OCI-LY7 (cell line): ENCODE measurements at regions of chr5 and their contacts with region 1.

Region 1: GRCh38 chr5:31825518-31826068 is 186.7 kb downstream of the PDZD2 start:
- DNase-seq: peak; percentile 80
- H3K4me3 ChIP-seq: no peak overlapping the region
- H3K27ac ChIP-seq: no peak overlapping the region
- H3K4me1 ChIP-seq: peaks cover 5% of the 10 kb centered on the region
- CTCF ChIP-seq: peak; percentile 94

Region 2: GRCh38 chr5:31581498-31582099 is 244.0 kb before region 1 on chr5:
- CTCF ChIA-PET with region 1: no interaction called
- POLR2A ChIA-PET with region 1: no interaction called
- intact Hi-C with region 1: loop called (anchors 5 kb)
- DNase-seq: peak; percentile 56
- H3K4me3 ChIP-seq: no peak overlapping the region
- H3K27ac ChIP-seq: no peak overlapping the region
- H3K4me1 ChIP-seq: no peaks in the 10 kb centered on the region
- CTCF ChIP-seq: peak; percentile 84

Region 3: DNA sequence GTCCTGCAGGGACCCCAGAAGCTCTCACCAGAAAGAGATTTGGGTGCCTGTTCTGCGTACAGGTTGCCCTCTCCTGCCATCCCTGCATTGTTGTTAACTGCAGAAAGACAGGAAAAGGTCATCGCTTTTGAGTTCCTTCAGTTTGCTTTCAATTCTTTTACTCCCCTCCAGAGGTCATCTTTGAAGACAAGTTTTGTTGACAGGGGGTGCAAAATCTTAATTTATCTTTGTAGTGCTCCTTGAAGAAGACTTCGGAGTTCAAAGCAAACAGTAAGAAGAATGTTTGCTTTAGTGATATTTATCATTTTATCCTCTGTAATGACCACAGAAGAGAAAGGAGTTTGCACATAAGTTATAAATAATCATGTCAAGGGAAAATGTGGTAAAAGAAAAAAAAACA is 13.4 kb after region 1 on chr5:
- CTCF ChIA-PET with region 1: no interaction called
- POLR2A ChIA-PET with region 1: no interaction called
- intact Hi-C with region 1: no loop called
- DNase-seq: no peak
- H3K4me3 ChIP-seq: no peak overlapping the region
- H3K27ac ChIP-seq: no peak overlapping the region
- H3K4me1 ChIP-seq: no peaks in the 10 kb centered on the region
- CTCF ChIP-seq: no peak

Region 4: GRCh38 chr5:31921852-31922305 is 96.3 kb after region 1 on chr5:
- CTCF ChIA-PET with region 1: no interaction called
- POLR2A ChIA-PET with region 1: interaction called, 11 read pairs
- intact Hi-C with region 1: no loop called
- DNase-seq: no peak
- H3K4me3 ChIP-seq: no peak overlapping the region
- H3K27ac ChIP-seq: no peak overlapping the region
- H3K4me1 ChIP-seq: no peaks in the 10 kb centered on the region
- CTCF ChIP-seq: no peak

Region 5: DNA sequence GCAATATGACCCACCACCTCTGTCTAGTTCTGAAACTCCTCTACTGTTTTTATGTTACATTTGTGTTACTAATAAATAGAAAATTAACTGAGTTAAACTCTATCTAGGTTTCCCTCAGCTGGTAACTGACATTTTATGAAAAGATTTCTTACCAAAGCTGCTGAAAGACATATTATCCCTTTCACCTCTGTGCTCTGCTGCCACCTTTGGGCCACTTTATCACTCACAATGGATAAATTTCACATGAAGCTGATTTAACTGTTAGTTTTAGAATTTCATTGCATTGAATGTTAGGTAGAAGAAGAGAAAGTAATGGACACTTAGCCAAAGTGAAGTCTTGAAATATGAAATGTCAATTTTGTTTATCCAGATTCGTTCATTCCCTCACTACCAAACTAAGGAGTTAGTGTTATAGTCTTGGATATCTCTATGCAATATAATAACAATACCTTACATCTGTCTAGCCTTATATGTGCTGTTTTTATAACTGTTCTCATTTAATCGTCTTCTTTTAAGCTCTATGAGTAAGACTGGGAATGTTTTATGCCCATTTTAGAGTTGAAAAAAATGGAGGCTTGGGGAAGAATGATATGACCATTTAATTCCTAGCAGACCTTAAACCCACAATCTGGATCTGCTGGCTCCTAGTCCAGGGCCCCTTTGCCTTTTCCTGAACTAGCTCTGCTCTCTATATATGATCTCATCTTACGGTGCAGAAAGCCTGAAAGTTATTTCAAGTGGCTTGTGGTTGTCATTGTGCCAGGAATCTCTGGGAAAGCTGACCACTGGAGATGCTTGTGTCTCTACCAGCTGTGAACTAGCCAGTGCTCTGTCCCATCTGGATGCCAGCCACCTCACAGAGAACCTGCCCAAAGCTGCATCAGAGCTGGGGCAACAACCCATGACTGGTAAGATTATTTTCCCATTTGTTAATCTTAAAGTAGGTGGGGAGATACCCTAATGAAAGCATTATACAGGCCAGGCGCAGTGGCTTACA is 251.4 kb after region 1 on chr5:
- CTCF ChIA-PET with region 1: interaction called, 3 read pairs
- POLR2A ChIA-PET with region 1: no interaction called
- intact Hi-C with region 1: loop called (anchors 1 kb)
- DNase-seq: peak; percentile 68
- H3K4me3 ChIP-seq: no peak overlapping the region
- H3K27ac ChIP-seq: no peak overlapping the region
- H3K4me1 ChIP-seq: no peaks in the 10 kb centered on the region
- CTCF ChIP-seq: peak; percentile 99

Region 6: DNA sequence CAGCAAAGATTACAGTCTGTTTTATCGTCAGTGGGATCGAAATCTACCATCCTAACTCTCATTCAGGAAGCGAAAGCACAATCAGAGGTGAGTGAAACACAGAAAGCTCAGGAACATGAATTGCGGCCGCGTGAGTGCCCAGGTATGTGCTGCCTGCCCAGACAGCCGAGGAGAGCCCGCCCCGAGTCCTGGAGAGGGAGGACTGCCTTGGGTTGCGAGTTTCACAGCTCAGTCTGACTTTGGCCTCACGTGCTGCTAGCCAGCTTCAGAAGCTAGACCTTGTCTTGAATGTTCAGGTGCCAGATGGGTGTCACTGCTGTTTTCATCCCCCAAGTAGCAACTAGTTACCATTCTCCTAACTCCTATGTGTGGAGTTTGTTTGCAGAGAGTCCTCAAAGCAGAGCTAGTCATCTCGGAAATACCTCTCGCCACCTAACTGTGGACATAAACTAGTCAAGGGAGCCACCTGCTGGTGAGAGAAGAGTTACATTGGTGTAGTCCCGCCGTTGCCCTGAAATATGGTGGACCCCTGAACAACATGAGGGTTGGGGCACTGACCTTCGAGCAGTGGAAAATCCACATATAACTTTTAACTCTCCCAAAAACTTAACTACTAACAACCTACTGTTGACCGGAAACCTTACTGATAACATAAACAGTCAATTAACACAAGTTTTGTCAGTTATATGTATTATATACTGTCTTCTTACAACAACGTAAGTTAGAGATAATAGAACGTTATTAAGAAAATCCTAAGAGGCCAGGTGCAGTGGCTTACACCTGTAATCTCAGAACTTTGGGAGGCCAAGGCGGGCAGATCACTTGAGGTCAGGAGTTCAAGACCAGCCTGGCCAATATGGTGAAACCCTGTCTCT is 267.6 kb after region 1 on chr5:
- CTCF ChIA-PET with region 1: interaction called, 4 read pairs
- POLR2A ChIA-PET with region 1: no interaction called
- intact Hi-C with region 1: loop called (anchors 1 kb)
- DNase-seq: peak; percentile 84
- H3K4me3 ChIP-seq: no peak overlapping the region
- H3K27ac ChIP-seq: no peak overlapping the region
- H3K4me1 ChIP-seq: no peaks in the 10 kb centered on the region
- CTCF ChIP-seq: peak; percentile 90